Activated B cell treated with CpG ODN at 0.5 μM for 24 hours (primary cell): ENCODE measurements at regions of chr1 and their contacts with region 1.

Region 1: DNA sequence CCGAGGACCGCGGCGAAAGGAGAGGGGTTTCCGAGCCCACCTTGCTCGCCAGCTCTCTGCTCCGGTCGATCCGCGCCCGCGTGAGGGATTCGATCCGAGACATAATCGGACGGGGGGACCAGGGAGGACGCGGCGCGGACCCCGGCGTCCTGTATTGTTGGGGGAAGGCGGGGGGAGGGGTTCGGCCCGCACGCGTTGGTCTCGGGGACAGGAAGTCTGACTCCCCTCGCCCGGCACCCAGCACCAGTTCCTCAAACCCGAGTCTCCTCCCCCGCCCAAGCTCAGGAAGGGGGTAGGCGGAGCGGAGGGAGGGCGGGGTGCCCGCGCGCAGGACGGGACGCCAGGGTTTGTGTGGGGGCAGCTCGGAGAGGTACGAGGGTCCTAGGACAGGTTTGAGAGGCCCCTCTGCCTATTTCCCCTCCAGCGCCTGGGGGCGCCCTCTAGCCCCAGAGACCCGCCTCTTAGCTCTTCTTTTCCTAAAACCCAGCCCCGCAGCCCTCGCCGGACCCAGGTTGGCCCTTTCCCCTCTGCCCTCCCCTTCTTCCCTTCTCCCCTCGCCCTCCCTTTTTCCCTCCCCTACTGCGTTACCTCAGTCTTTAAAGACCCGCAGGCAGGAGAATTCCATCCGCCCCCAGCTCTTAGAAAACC is at the start of gene ARHGEF2:
- DNase-seq: peak; percentile 80
- ATAC-seq: peak; percentile 75
- H3K4me3 Mint-ChIP-seq: peak within 1 kb of the TSS; percentile 97
- H3K27ac Mint-ChIP-seq: peak within 1 kb of the TSS; percentile 90
- H3K4me1 Mint-ChIP-seq: peaks cover 85% of the 10 kb centered on the region
- H3K27me3 Mint-ChIP-seq: no peaks in the 10 kb centered on the region
- CTCF ChIP-seq: no peak
- total RNA-seq, gene ARHGEF2: 188 and 207 TPM in 2 replicates

Region 2: GRCh38 chr1:155859234-155859829 is 119.1 kb before region 1 on chr1 and contains the start of gene SYT11:
- CTCF ChIA-PET with region 1: no interaction called
- POLR2A ChIA-PET with region 1: interaction called, 6 read pairs
- intact Hi-C with region 1: loop called (anchors 2 kb)
- DNase-seq: peak; percentile 82
- ATAC-seq: peak; percentile 91
- H3K4me3 Mint-ChIP-seq: peak within 1 kb of the TSS; percentile 98
- H3K27ac Mint-ChIP-seq: peak within 1 kb of the TSS; percentile 97
- H3K4me1 Mint-ChIP-seq: peaks cover 49% of the 10 kb centered on the region
- H3K27me3 Mint-ChIP-seq: peaks cover 2% of the 10 kb centered on the region
- CTCF ChIP-seq: no peak
- total RNA-seq, gene SYT11: 3.3 and 3.7 TPM in 2 replicates

Region 3: DNA sequence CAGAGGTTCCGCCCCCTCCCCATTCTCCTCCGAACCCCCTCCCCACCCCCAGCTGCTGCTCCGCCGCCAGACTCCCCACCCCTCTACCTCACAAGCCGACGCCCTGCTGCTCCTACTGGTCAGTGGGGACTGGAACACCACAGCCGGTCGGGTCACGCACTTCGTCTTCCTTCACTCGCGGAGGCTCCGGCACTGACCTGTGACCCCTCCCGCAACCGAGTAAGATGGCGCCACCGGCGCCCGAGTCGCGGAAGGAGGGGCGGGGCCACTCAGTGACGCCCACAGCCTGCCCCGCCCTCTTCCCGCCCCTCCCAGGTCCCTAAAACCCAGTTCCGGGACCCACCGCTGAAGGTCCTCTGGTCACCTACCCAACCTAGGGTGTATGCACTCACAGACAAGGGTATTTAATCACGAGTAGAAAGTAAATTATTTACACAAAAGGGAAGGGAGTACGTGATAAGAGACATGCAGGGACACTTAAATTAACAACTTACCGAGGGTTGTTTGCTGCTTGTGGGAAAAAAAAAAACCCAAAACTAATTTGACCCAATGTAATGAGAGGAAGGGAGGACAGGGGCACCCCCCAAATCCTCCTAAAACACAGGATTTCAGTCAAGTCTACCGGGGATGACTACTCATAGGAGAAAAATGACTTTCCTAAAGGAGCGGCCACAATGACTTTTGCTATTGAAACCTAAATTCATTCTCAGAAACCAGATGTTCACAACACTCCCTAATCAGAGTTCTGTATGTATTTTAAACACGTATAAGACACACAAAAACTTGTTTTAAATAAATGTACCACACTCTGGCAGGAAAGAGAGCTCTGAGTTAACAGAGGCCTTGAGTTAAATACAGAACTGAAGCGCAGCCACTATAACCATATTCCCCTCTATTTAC is 67.0 kb before region 1 on chr1 and contains the start of gene RIT1:
- CTCF ChIA-PET with region 1: no interaction called
- POLR2A ChIA-PET with region 1: interaction called, 5 read pairs
- intact Hi-C with region 1: loop called (anchors 2 kb)
- DNase-seq: peak; percentile 74
- ATAC-seq: peak; percentile 97
- H3K4me3 Mint-ChIP-seq: peak within 1 kb of the TSS; percentile 99
- H3K27ac Mint-ChIP-seq: peak within 1 kb of the TSS; percentile 97
- H3K4me1 Mint-ChIP-seq: peaks cover 22% of the 10 kb centered on the region
- H3K27me3 Mint-ChIP-seq: no peaks in the 10 kb centered on the region
- CTCF ChIP-seq: no peak
- total RNA-seq, gene RIT1: 32.7 and 38.6 TPM in 2 replicates

Region 4: GRCh38 chr1:155946633-155947219 is 31.7 kb before region 1 on chr1:
- CTCF ChIA-PET with region 1: interaction called, 146 read pairs
- POLR2A ChIA-PET with region 1: interaction called, 403 read pairs
- intact Hi-C with region 1: loop called (anchors 1 kb)
- DNase-seq: no peak
- ATAC-seq: peak; percentile 7
- H3K4me3 Mint-ChIP-seq: peak overlapping the region; percentile 46
- H3K27ac Mint-ChIP-seq: peak overlapping the region; percentile 92
- H3K4me1 Mint-ChIP-seq: peaks cover 60% of the 10 kb centered on the region
- H3K27me3 Mint-ChIP-seq: no peaks in the 10 kb centered on the region
- CTCF ChIP-seq: no peak

Region 5: DNA sequence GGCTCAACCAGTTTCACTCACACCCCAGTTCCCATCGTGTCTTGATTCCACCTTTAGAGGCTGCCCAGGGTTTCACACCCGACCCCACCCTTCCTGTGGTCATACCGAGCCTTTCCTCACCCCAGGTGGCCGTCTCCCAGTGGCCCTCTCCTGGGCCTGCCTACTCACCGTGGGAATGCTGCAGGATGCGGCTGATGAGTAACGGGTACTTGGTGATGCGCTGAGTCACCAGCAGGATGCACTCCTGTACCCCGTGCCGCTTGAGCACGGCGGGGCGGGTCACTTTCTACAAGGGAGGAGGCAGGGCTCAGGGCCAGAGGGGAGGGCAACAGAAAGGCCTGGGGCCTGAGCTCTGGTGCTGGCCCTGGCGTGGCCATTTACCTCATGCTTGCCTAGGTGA is 16.5 kb before region 1 on chr1:
- CTCF ChIA-PET with region 1: interaction called, 8 read pairs
- POLR2A ChIA-PET with region 1: interaction called, 127 read pairs
- intact Hi-C with region 1: loop called (anchors 1 kb)
- DNase-seq: no peak
- ATAC-seq: peak; percentile 53
- H3K4me3 Mint-ChIP-seq: peak overlapping the region; percentile 41
- H3K27ac Mint-ChIP-seq: peak overlapping the region; percentile 85
- H3K4me1 Mint-ChIP-seq: peaks cover 67% of the 10 kb centered on the region
- H3K27me3 Mint-ChIP-seq: no peaks in the 10 kb centered on the region
- CTCF ChIP-seq: no peak

Region 6: GRCh38 chr1:155989242-155990004 is 11.0 kb after region 1 on chr1:
- CTCF ChIA-PET with region 1: interaction called, 16 read pairs
- POLR2A ChIA-PET with region 1: interaction called, 26 read pairs
- intact Hi-C with region 1: no loop called
- DNase-seq: peak; percentile 73
- ATAC-seq: peak; percentile 99
- H3K4me3 Mint-ChIP-seq: no peak overlapping the region
- H3K27ac Mint-ChIP-seq: peak overlapping the region; percentile 70
- H3K4me1 Mint-ChIP-seq: peaks cover 22% of the 10 kb centered on the region
- H3K27me3 Mint-ChIP-seq: no peaks in the 10 kb centered on the region
- CTCF ChIP-seq: peak; percentile 43